Activated CD8-positive, alpha-beta memory T cell treated with anti-CD3 and anti-CD28 coated beads, Interleukin-2, amount 10 ng/mL, durations not matched to agents 7 days and 5 days (primary cell): ENCODE measurements at regions of chr10 and their contacts with region 1.

Region 1: GRCh38 chr10:101031128-101031795 is at the starts of genes PDZD7 and SFXN3:
- DNase-seq: peak; percentile 97
- ATAC-seq: peak; percentile 89
- H3K4me3 Mint-ChIP-seq: peak within 1 kb of the TSS; percentile 85
- H3K27ac Mint-ChIP-seq: peak within 1 kb of the TSS; percentile 91
- H3K4me1 Mint-ChIP-seq: peaks cover 15% of the 10 kb centered on the region
- H3K27me3 Mint-ChIP-seq: peaks cover 18% of the 10 kb centered on the region
- total RNA-seq, gene PDZD7: 0.59 to 1.2 TPM
- total RNA-seq, gene SFXN3: 38.2 to 48.8 TPM

Region 2: GRCh38 chr10:101050208-101051069 is 19.2 kb after region 1 on chr10:
- CTCF ChIA-PET with region 1: interaction called, 402 read pairs
- DNase-seq: peak; percentile 84
- ATAC-seq: peak; percentile 93
- H3K4me3 Mint-ChIP-seq: no peak overlapping the region
- H3K27ac Mint-ChIP-seq: no peak overlapping the region
- H3K4me1 Mint-ChIP-seq: peaks cover 27% of the 10 kb centered on the region
- H3K27me3 Mint-ChIP-seq: peaks cover 54% of the 10 kb centered on the region

Region 3: GRCh38 chr10:101130984-101131961 is 100.0 kb after region 1 on chr10 and contains the start of gene TLX1:
- CTCF ChIA-PET with region 1: no interaction called
- DNase-seq: no peak
- ATAC-seq: no peak
- H3K4me3 Mint-ChIP-seq: no peak within 1 kb of the TSS
- H3K27ac Mint-ChIP-seq: no peak within 1 kb of the TSS
- H3K4me1 Mint-ChIP-seq: peaks cover 11% of the 10 kb centered on the region
- H3K27me3 Mint-ChIP-seq: peaks cover 91% of the 10 kb centered on the region
- total RNA-seq, gene TLX1: not detected